Activated naive CD4-positive, alpha-beta T cell treated with anti-CD3 and anti-CD28 coated beads for 36 hours (primary cell): ENCODE measurements at regions of chr12 and their contacts with region 1.

Region 1: GRCh38 chr12:4037747-4038312 is 164.6 kb upstream of the PARP11 start:
- DNase-seq: peak; percentile 51
- H3K4me3 Mint-ChIP-seq: no peak overlapping the region
- H3K27ac Mint-ChIP-seq: no peak overlapping the region
- H3K4me1 Mint-ChIP-seq: peaks cover 4% of the 10 kb centered on the region
- H3K27me3 Mint-ChIP-seq: no peaks in the 10 kb centered on the region

Region 2: GRCh38 chr12:3964439-3964838 is 73.4 kb before region 1 on chr12:
- CTCF ChIA-PET with region 1: interaction called, 23 read pairs
- intact Hi-C with region 1: no loop called
- DNase-seq: peak; percentile 48
- H3K4me3 Mint-ChIP-seq: no peak overlapping the region
- H3K27ac Mint-ChIP-seq: no peak overlapping the region
- H3K4me1 Mint-ChIP-seq: peaks cover 20% of the 10 kb centered on the region
- H3K27me3 Mint-ChIP-seq: no peaks in the 10 kb centered on the region

Region 3: GRCh38 chr12:3998968-3999826 is 38.6 kb before region 1 on chr12:
- CTCF ChIA-PET with region 1: interaction called, 38 read pairs
- intact Hi-C with region 1: loop called (anchors 2 kb)
- DNase-seq: no peak
- H3K4me3 Mint-ChIP-seq: no peak overlapping the region
- H3K27ac Mint-ChIP-seq: no peak overlapping the region
- H3K4me1 Mint-ChIP-seq: peaks cover 5% of the 10 kb centered on the region
- H3K27me3 Mint-ChIP-seq: no peaks in the 10 kb centered on the region

Region 4: GRCh38 chr12:4685317-4685716 is 647.5 kb after region 1 on chr12:
- CTCF ChIA-PET with region 1: no interaction called
- intact Hi-C with region 1: no loop called
- DNase-seq: no peak
- H3K4me3 Mint-ChIP-seq: no peak overlapping the region
- H3K27ac Mint-ChIP-seq: no peak overlapping the region
- H3K4me1 Mint-ChIP-seq: no peaks in the 10 kb centered on the region
- H3K27me3 Mint-ChIP-seq: no peaks in the 10 kb centered on the region